CD4-positive, alpha-beta T cell (primary cell): ENCODE measurements at regions of chr14 and their contacts with region 1.

Region 1: GRCh38 chr14:24241829-24242443 is 487 bp downstream of the TINF2 start:
- DNase-seq: peak; percentile 85 to 97 (median 92)
- ATAC-seq: peak; percentile 80
- H3K4me3 ChIP-seq: peak overlapping the region; percentile 93
- H3K4me3 Mint-ChIP-seq: peak overlapping the region; percentile 99
- H3K27ac ChIP-seq: peak overlapping the region; percentile 97 to 100
- H3K27ac Mint-ChIP-seq: peak overlapping the region; percentile 100
- H3K4me1 ChIP-seq: peaks cover 63% of the 10 kb centered on the region
- H3K4me1 Mint-ChIP-seq: peaks cover 69% of the 10 kb centered on the region
- H3K27me3 ChIP-seq: no peaks in the 10 kb centered on the region
- H3K27me3 Mint-ChIP-seq: no peaks in the 10 kb centered on the region
- CTCF ChIP-seq: no peak

Region 2: GRCh38 chr14:23816371-23816770 is 425.6 kb before region 1 on chr14:
- CTCF ChIA-PET with region 1: no interaction called
- POLR2A ChIA-PET with region 1: no interaction called
- intact Hi-C with region 1: no loop called
- DNase-seq: no peak
- ATAC-seq: no peak
- H3K4me3 ChIP-seq: no peak overlapping the region
- H3K4me3 Mint-ChIP-seq: no peak overlapping the region
- H3K27ac ChIP-seq: no peak overlapping the region
- H3K27ac Mint-ChIP-seq: no peak overlapping the region
- H3K4me1 ChIP-seq: no peaks in the 10 kb centered on the region
- H3K4me1 Mint-ChIP-seq: no peaks in the 10 kb centered on the region
- H3K27me3 ChIP-seq: peaks cover 0 to 2% of the 10 kb centered on the region in 2 experiments
- H3K27me3 Mint-ChIP-seq: peaks cover 22% of the 10 kb centered on the region
- CTCF ChIP-seq: no peak

Region 3: GRCh38 chr14:24108336-24108874 is 133.5 kb before region 1 on chr14:
- CTCF ChIA-PET with region 1: interaction called, 4 read pairs
- POLR2A ChIA-PET with region 1: interaction called, 49 read pairs
- intact Hi-C with region 1: no loop called
- DNase-seq: no peak
- ATAC-seq: peak; percentile 25
- H3K4me3 ChIP-seq: no peak overlapping the region
- H3K4me3 Mint-ChIP-seq: peak overlapping the region; percentile 83
- H3K27ac ChIP-seq: peak overlapping the region; percentile 28 to 39
- H3K27ac Mint-ChIP-seq: peak overlapping the region; percentile 95
- H3K4me1 ChIP-seq: peaks cover 20% of the 10 kb centered on the region
- H3K4me1 Mint-ChIP-seq: peaks cover 10% of the 10 kb centered on the region
- H3K27me3 ChIP-seq: no peaks in the 10 kb centered on the region
- H3K27me3 Mint-ChIP-seq: no peaks in the 10 kb centered on the region
- CTCF ChIP-seq: no peak

Region 4: DNA sequence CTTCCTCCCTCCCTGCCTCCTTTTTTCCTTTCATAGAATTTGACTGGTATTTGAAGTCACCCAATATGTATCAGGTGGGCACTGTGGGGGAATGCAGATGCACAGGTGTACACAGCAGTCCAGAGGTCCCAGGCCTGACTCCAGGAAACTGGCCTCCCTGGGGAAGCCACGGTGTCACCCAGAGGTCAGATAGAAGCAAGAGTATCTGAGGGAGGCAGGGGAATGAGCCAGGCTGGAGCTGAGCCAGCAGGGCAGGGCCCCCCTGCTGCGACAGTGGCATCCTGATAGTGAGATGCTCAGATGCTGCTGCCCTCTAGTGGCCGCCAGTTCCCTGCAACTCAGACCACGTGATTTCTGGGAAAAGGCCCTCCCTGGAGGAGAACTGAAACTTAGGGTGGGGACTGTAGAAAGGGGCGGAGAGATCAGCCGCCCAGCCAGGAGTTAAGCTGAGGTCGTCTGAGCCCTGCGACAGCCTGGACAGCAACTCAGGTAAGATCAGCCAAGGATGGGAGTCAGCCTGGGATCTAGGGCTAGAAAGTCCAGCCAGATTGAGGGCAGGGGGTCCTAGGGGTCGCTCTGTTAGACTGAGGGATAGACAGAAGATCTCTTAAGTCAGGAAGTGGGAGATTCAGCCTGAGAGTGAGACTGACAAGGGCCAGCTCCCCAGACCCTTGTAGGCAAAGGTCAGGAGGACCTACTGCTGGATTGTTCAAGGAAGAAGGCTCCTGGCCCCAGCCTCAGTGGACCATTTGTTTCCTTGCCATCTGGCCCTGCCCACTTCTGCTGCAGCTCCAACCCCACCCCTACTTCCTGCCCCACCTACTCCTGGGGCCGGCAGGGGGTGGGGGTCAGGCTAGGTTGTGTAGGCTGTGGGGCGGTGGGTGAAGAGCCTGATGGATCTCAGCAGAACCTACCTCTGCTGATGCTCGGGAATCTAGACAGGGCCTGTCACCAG is 80.8 kb before region 1 on chr14 and contains the start of gene IRF9:
- CTCF ChIA-PET with region 1: interaction called, 10 read pairs
- POLR2A ChIA-PET with region 1: interaction called, 26 read pairs
- intact Hi-C with region 1: no loop called
- DNase-seq: peak; percentile 94 to 100 (median 98)
- ATAC-seq: peak; percentile 84
- H3K4me3 ChIP-seq: peak within 1 kb of the TSS; percentile 95
- H3K4me3 Mint-ChIP-seq: peak within 1 kb of the TSS; percentile 95
- H3K27ac ChIP-seq: peak within 1 kb of the TSS; percentile 97 to 98
- H3K27ac Mint-ChIP-seq: peak within 1 kb of the TSS; percentile 98
- H3K4me1 ChIP-seq: peaks cover 52% of the 10 kb centered on the region
- H3K4me1 Mint-ChIP-seq: peaks cover 57% of the 10 kb centered on the region
- H3K27me3 ChIP-seq: no peaks in the 10 kb centered on the region
- H3K27me3 Mint-ChIP-seq: no peaks in the 10 kb centered on the region
- CTCF ChIP-seq: peak; percentile 84
- total RNA-seq, gene IRF9: 248 to 262 TPM

Region 5: GRCh38 chr14:24195191-24196070 is 46.5 kb before region 1 on chr14 and contains the start of gene TM9SF1:
- CTCF ChIA-PET with region 1: interaction called, 12 read pairs
- POLR2A ChIA-PET with region 1: interaction called, 46 read pairs
- intact Hi-C with region 1: no loop called
- DNase-seq: peak; percentile 78 to 95 (median 86)
- ATAC-seq: peak; percentile 88
- H3K4me3 ChIP-seq: peak within 1 kb of the TSS; percentile 93
- H3K4me3 Mint-ChIP-seq: peak within 1 kb of the TSS; percentile 87
- H3K27ac ChIP-seq: peak within 1 kb of the TSS; percentile 97 to 99
- H3K27ac Mint-ChIP-seq: peak within 1 kb of the TSS; percentile 92
- H3K4me1 ChIP-seq: peaks cover 37% of the 10 kb centered on the region
- H3K4me1 Mint-ChIP-seq: peaks cover 51% of the 10 kb centered on the region
- H3K27me3 ChIP-seq: no peaks in the 10 kb centered on the region
- H3K27me3 Mint-ChIP-seq: no peaks in the 10 kb centered on the region
- CTCF ChIP-seq: no peak
- total RNA-seq, gene TM9SF1: 12.9 to 13.0 TPM

Region 6: DNA sequence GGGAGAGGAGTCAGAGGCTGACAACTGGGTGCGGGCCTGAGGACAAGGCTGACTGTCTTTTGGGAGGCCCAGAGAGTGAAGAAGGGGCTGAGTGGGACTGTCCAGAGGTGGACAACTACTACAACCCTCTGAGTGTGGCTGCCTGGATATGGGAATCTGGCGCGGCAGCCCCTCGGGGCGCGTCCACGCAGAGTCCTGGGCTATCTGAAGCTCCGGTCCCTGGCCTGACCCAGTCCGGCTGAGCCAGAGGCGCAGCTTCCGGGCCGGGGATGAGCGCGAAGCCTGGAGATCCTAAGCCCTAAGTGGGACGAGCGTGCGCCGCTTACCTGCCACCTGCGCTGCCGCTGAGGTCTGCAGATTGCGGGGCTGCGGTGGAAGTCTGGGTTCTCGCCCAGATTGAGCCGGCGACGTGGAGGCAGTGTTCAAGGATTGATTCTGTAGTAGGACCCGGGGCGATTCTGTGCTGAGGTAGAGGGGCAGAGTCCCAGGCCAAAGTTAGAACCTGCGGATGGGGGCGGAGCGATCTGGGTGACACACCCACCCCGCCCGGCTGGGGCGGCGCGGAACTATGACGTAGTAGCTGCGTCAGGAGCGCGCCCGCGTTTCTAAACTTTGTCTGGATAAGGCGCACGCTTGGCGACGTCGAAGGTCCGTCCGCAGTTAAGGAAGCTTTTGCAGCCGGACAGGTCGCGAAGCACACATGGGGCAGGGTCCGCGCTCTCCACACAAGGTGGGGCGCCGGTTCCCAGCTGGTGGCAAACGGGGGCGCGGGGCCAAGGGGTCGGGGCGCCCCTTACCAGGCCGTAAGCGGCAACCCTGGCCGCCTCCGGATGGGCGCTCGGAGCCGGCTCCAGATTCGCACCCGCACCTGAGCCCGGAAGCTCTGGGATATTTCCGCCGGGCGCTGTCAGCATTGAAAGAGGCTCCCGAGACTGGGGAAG is 57.6 kb after region 1 on chr14 and contains the starts of genes DHRS1 and NOP9:
- CTCF ChIA-PET with region 1: interaction called, 90 read pairs
- POLR2A ChIA-PET with region 1: interaction called, 66 read pairs
- intact Hi-C with region 1: loop called (anchors 1 kb)
- DNase-seq: peak; percentile 86 to 98 (median 92)
- ATAC-seq: peak; percentile 77
- H3K4me3 ChIP-seq: peak within 1 kb of the TSS; percentile 87
- H3K4me3 Mint-ChIP-seq: peak within 1 kb of the TSS; percentile 99
- H3K27ac ChIP-seq: peak within 1 kb of the TSS; percentile 81 to 87
- H3K27ac Mint-ChIP-seq: peak within 1 kb of the TSS; percentile 98
- H3K4me1 ChIP-seq: peaks cover 56% of the 10 kb centered on the region
- H3K4me1 Mint-ChIP-seq: peaks cover 64% of the 10 kb centered on the region
- H3K27me3 ChIP-seq: no peaks in the 10 kb centered on the region
- H3K27me3 Mint-ChIP-seq: no peaks in the 10 kb centered on the region
- CTCF ChIP-seq: no peak
- total RNA-seq, gene DHRS1: 21.5 to 23.5 TPM
- total RNA-seq, gene NOP9: 25.9 to 27.5 TPM

Region 7: GRCh38 chr14:24431569-24432258 is 189.8 kb after region 1 on chr14:
- CTCF ChIA-PET with region 1: interaction called, 20 read pairs
- POLR2A ChIA-PET with region 1: interaction called, 43 read pairs
- intact Hi-C with region 1: loop called in 1 of 2 experiments (anchors 1 kb)
- DNase-seq: peak; percentile 78 to 96 (median 86)
- ATAC-seq: peak; percentile 53
- H3K4me3 ChIP-seq: peak overlapping the region; percentile 80
- H3K4me3 Mint-ChIP-seq: peak overlapping the region; percentile 92
- H3K27ac ChIP-seq: peak overlapping the region; percentile 92 to 94
- H3K27ac Mint-ChIP-seq: peak overlapping the region; percentile 97
- H3K4me1 ChIP-seq: peaks cover 63% of the 10 kb centered on the region
- H3K4me1 Mint-ChIP-seq: peaks cover 64% of the 10 kb centered on the region
- H3K27me3 ChIP-seq: no peaks in the 10 kb centered on the region
- H3K27me3 Mint-ChIP-seq: no peaks in the 10 kb centered on the region
- CTCF ChIP-seq: peak; percentile 89